Heart left ventricle (tissue), 16 donors: ENCODE measurements at regions of chr11 and their contacts with region 1.

Region 1: DNA sequence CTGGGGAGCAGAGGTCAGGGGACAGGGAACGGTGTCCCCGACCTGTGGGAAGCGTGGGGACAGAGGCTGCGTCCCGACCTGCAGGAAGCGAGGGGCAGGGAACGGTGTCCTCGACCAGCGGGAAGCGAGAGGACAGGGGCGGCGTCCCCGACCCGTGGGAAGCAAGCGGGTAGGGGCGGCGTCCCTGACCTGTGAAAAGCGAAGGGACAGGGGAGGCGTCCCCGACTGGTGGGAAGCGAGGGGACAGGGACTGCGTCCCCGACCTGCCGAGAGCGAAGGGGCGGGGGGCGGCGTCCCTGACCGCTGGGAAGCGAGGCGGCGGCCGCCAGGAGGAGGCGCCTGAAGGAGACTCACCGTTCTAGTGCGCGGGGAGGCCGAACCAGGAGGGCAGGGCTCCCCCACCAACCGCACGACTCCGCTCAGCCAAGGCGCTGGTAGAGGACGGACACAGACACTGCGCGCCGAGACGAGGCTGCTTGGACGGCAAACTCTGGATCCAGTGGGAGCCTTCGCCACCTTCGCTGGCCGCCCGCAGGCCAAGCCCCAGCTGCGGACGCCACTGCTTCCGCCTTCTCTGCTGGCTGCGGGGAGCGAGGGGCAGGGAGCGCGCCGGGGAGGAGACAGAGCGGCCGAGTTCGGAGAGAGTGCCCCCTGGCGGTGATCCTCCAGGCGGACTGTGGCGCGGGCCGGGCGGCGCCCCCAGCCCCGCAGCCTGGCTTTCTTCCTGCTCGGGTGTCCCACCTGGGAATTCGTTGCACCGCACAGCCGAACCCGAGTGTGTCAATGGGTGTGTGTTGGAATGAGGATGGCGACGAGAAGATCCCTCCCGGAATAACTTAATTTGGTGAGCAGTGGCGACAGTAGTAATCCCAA is at the start of gene TRAF6:
- DNase-seq: peak; percentile 91 to 96 (median 92)
- ATAC-seq: peak; percentile 93 to 97 (median 97)
- H3K4me3 ChIP-seq: peak within 1 kb of the TSS; percentile 62 to 98 (median 86)
- H3K27ac ChIP-seq: peak within 1 kb of the TSS; percentile 73 to 96 (median 89)
- H3K4me1 ChIP-seq: peaks cover 0 to 46% (median 25%) of the 10 kb centered on the region in 12 donors
- H3K27me3 ChIP-seq: no peaks in the 10 kb centered on the region
- CTCF ChIP-seq: peak in 11 of 12 donors; percentile 82 to 96 (median 92)
- POLR2A ChIP-seq: peak in 1 of 2 donors; percentile 75
- total RNA-seq, gene TRAF6: 10.1 to 17.4 (median 15.1) TPM

Region 2: DNA sequence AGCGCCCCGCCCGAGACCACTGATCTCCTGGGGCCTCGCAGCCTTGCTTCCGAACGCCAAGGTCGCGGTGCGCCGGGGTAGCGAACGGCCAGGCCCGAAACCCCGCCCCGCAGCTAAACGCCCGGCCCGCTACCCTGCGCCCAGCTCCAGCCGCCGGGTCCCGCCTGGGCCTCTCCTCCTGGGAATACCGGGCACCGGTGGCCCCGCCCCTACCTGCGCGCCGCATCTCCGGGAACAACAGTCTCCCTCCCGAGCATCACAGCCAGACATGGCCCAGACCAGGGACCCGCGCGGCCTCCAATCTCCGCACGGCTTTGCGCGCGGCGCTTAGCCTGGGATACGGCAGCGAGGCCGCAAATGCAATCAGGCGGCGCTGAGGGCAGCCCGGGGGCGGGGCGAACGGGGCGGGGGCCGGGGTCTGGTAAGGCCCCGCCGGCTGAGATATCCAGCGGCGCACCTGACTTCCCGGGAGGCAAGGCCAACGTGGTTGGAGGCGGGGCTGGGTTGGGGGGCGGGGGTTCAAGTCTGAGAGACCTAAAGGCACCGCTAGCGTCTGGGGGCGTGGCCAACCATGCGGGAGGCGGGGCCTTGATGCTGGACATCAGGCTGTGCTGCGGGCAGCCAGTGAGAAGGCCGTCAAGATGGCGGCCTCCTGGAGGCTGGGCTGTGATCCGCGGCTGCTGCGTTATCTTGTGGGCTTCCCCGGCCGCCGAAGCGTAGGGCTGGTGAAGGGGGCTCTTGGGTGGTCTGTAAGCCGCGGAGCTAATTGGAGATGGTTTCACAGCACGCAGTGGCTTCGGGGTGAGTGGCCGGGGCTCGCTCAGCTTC is 1593.7 kb before region 1 on chr11 and contains the starts of genes APIP and PDHX:
- intact Hi-C with region 1: loop called in 1 of 10 experiments (anchors 10 kb)
- DNase-seq: peak; percentile 98 to 100 (median 99)
- ATAC-seq: peak; percentile 95 to 99 (median 96)
- H3K4me3 ChIP-seq: peak within 1 kb of the TSS; percentile 54 to 96 (median 78)
- H3K27ac ChIP-seq: peak within 1 kb of the TSS; percentile 85 to 99 (median 96)
- H3K4me1 ChIP-seq: peaks cover 0 to 47% (median 27%) of the 10 kb centered on the region in 12 donors
- H3K27me3 ChIP-seq: no peaks in the 10 kb centered on the region
- CTCF ChIP-seq: no peak
- POLR2A ChIP-seq: peak; percentile 98 to 99
- total RNA-seq, gene APIP: 20.8 to 35.3 (median 26.6) TPM
- total RNA-seq, gene PDHX: 87.0 to 204 (median 138) TPM

Region 3: DNA sequence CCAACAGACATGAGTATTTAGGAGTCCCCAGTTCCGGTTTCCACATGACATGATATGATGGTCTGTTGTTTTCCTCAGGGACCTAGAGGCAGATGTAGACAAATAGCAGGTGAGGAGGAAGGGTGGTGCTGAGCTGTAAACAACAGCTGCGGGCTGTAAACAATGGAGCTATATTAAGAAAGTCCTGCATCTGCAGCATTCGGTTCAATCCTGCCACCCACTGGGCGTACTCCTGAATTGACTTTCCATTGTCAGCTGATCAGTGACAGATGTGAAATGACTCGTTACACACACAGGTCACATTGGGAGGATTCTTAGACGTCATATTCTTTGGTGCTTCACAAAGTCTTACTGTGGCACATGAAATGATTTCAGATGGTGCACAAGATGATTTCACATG is 31.1 kb after region 1 on chr11:
- intact Hi-C with region 1: loop called in 1 of 10 experiments (anchors 2 kb)
- DNase-seq: peak in 4 of 5 donors; percentile 36 to 45 (median 42)
- ATAC-seq: peak; percentile 69 to 93 (median 79)
- H3K4me3 ChIP-seq: no peak overlapping the region
- H3K27ac ChIP-seq: no peak overlapping the region
- H3K4me1 ChIP-seq: peaks cover 0 to 5% (median 0%) of the 10 kb centered on the region in 12 donors
- H3K27me3 ChIP-seq: no peaks in the 10 kb centered on the region
- CTCF ChIP-seq: peak; percentile 33 to 69 (median 51)
- POLR2A ChIP-seq: no peak

Region 4: DNA sequence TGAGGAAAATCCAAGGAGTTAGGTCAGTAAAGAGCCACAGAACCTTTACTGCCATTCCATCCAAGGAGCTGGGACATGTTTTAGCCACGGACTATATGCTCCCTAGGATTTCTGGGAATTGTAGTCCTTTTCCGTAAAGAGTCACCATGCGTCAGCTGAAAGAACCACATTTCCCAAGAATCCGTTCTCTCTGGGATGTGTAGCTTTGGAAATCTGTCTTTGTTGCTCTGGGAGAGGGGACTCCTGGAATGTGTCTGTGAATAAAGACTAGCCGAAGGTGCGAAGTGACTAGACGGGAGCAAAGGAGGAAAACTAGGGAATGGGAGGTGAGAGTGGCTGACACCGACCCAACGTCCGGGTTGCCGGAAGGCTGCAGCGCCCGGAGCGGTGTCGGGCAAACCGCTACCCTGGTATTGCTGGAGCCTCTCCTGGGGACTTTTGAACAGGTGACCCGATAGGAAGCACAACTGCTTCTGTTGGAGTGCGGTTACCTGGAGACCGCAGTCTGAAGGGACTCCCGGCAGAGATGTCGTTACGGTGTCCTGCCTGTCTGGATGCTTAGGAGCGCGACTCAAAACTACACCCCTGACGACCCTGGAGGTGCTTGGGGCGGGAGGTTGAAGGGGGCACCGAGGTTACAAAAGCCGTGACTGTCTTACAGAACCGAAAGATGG is 84.5 kb after region 1 on chr11 and contains the start of gene IFTAP:
- intact Hi-C with region 1: loop called in 1 of 10 experiments (anchors 10 kb)
- DNase-seq: peak in 4 of 5 donors; percentile 32 to 63 (median 43)
- ATAC-seq: peak; percentile 100
- H3K4me3 ChIP-seq: peak within 1 kb of the TSS; percentile 66 to 93 (median 78)
- H3K27ac ChIP-seq: peak within 1 kb of the TSS in 10 of 12 donors; percentile 3 to 79 (median 66)
- H3K4me1 ChIP-seq: peaks cover 0 to 16% (median 10%) of the 10 kb centered on the region in 12 donors
- H3K27me3 ChIP-seq: peaks cover 0 to 19% (median 0%) of the 10 kb centered on the region in 9 donors
- CTCF ChIP-seq: no peak
- POLR2A ChIP-seq: peak in 1 of 2 donors; percentile 46
- total RNA-seq, gene IFTAP: 30.9 to 49.6 (median 42.5) TPM